ENCODE measurements at regions of chr7 and their contacts with region 1.

Region 1: DNA sequence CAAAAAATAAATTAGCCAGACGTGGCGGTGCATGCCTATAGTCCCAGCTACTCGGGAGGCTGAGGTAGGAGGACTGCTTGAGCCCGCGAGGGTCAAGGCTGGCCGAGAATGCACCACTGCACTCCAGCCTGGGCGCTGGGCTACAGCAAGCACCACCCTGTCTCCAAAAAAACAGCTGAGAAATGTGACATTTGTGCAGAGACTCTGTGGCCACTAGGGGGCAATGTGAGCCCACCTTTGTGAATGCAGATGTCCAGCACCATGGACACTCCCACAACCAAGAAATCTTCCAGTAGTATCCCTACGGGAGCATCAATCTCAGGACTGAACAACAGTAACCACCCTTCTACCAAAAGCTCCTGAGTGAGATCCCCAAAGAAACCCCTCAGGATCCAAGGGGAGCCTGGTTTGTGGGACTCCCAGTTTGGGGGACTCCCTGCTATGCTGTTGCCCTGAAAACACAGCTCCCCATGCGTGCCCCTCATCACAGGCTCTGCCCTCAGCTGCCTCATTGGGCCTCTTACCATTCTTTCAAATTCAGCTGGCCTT is 6.2 kb upstream of the AHCYL2 start:
- DNase-seq: peak; percentile 88
- ATAC-seq: peak; percentile 90

Region 2: GRCh38 chr7:128904381-128905197 is 314.0 kb before region 1 on chr7:
- intact Hi-C with region 1: loop called (anchors 10 kb)
- DNase-seq: peak; percentile 25
- ATAC-seq: peak; percentile 38

Region 3: GRCh38 chr7:129298268-129298893 is 79.8 kb after region 1 on chr7:
- intact Hi-C with region 1: loop called (anchors 1 kb)
- DNase-seq: no peak
- ATAC-seq: no peak

Region 4: DNA sequence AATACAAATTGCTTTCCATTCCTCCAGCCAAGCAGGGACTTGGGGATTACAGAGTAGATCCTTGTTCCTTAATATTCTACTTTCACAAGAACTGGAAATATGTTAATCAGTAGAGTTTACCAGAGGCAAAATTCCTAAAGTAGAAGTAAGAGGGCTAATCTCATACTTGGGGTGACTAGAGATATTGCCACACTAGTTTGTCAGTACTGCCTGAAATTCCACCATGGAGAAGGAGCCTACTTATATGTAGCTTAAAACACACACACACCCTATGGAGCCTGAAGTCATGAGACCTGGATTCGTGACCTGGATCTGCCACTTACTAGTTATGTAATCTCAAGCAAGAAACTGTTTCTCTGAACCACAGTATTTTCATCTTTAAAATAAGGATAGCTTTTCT is 249.5 kb after region 1 on chr7:
- intact Hi-C with region 1: loop called (anchors 2 kb)
- DNase-seq: no peak
- ATAC-seq: no peak